GM12878 (cell line): ENCODE measurements at regions of chr19 and their contacts with region 1.

Region 1: GRCh38 chr19:42926781-42927180 is 9.1 kb upstream of the PSG6 start:
- DNase-seq: no peak
- ATAC-seq: no peak
- H3K4me3 ChIP-seq: no peak overlapping the region
- H3K27ac ChIP-seq: no peak overlapping the region
- H3K4me1 ChIP-seq: no peaks in the 10 kb centered on the region
- H3K27me3 ChIP-seq: no peaks in the 10 kb centered on the region
- CTCF ChIP-seq: no peak
- EP300 ChIP-seq: no peak
- POLR2A ChIP-seq: no peak
- RAD21 ChIP-seq: no peak

Region 2: DNA sequence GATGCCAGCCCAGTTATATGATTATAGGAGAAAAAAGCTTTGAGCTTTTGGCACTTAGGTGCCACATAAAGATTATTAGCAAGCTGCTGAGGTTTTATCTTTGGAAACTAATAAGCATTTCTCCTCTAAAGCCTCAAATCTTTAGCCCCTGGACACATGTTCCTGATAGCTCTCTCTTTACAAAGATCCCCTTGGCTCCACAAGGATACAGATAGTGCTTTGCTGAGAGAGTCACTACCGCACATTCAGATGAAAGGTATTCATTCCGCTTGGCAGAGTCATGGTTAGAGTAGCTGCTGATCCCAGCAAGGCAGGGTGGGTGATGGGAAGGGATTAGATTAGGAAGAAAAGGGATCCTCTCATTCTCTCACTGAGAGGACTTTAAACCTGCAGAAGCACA is 38.4 kb after region 1 on chr19:
- CTCF ChIA-PET with region 1: no interaction called
- POLR2A ChIA-PET with region 1: no interaction called
- RAD21 ChIA-PET with region 1: no interaction called
- SMC1A ChIA-PET with region 1: no interaction called
- in situ Hi-C with region 1: no loop called
- intact Hi-C with region 1: no loop called
- DNase-seq: no peak
- ATAC-seq: no peak
- H3K4me3 ChIP-seq: no peak overlapping the region
- H3K27ac ChIP-seq: no peak overlapping the region
- H3K4me1 ChIP-seq: no peaks in the 10 kb centered on the region
- H3K27me3 ChIP-seq: no peaks in the 10 kb centered on the region
- CTCF ChIP-seq: no peak
- EP300 ChIP-seq: no peak
- POLR2A ChIP-seq: no peak
- RAD21 ChIP-seq: no peak

Region 3: GRCh38 chr19:43028861-43029260 is 102.1 kb after region 1 on chr19:
- CTCF ChIA-PET with region 1: no interaction called
- POLR2A ChIA-PET with region 1: no interaction called
- RAD21 ChIA-PET with region 1: no interaction called
- SMC1A ChIA-PET with region 1: no interaction called
- in situ Hi-C with region 1: no loop called
- intact Hi-C with region 1: no loop called
- DNase-seq: no peak
- ATAC-seq: no peak
- H3K4me3 ChIP-seq: no peak overlapping the region
- H3K27ac ChIP-seq: no peak overlapping the region
- H3K4me1 ChIP-seq: no peaks in the 10 kb centered on the region
- H3K27me3 ChIP-seq: no peaks in the 10 kb centered on the region
- CTCF ChIP-seq: no peak
- EP300 ChIP-seq: no peak
- POLR2A ChIP-seq: no peak
- RAD21 ChIP-seq: no peak

Region 4: GRCh38 chr19:43080186-43080585 is 153.4 kb after region 1 on chr19:
- CTCF ChIA-PET with region 1: interaction called, 3 read pairs
- POLR2A ChIA-PET with region 1: no interaction called
- RAD21 ChIA-PET with region 1: no interaction called
- SMC1A ChIA-PET with region 1: no interaction called
- in situ Hi-C with region 1: no loop called
- intact Hi-C with region 1: loop called (anchors 10 kb)
- DNase-seq: no peak
- ATAC-seq: no peak
- H3K4me3 ChIP-seq: no peak overlapping the region
- H3K27ac ChIP-seq: no peak overlapping the region
- H3K4me1 ChIP-seq: no peaks in the 10 kb centered on the region
- H3K27me3 ChIP-seq: no peaks in the 10 kb centered on the region
- CTCF ChIP-seq: no peak
- EP300 ChIP-seq: no peak
- POLR2A ChIP-seq: no peak
- RAD21 ChIP-seq: no peak